Upper lobe of right lung (tissue), 1 donor: ENCODE measurements at regions of chr7 and their contacts with region 1.

Region 1: DNA sequence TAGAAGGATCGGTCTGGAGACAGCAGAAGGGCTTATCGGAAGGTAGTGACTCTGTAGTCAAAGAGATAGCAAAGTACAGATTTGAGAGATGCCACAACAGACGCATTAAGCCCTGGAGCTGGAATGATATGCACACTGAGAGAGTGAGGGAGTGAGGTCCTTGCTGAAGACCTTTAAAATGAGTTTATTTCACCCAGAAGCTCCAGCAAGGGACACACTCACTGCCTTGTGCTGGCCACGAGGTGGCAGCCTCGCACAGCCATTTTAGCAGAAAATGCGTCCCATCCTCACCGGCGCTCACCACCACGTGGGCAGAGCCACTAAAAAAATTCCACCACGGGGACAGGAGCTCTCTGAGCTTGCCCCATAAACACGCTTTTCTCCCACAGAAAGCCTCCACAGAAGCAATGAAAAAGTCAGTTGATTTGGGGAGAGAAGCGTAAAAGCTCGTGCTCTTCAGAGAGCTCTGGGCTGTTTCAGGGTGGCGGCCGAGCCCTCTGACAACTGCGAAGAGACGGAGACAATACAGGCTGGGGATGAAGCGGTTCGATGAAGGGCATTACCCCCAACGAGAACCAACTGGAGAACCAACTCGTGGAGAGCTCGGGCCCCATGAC is 163.0 kb upstream of the KLF14 start:
- DNase-seq: peak; percentile 86
- ATAC-seq: peak; percentile 64
- H3K4me3 ChIP-seq: no peak overlapping the region
- H3K27ac ChIP-seq: peak overlapping the region; percentile 37
- H3K4me1 ChIP-seq: peaks cover 78% of the 10 kb centered on the region
- H3K27me3 ChIP-seq: no peaks in the 10 kb centered on the region
- CTCF ChIP-seq: peak; percentile 79

Region 2: DNA sequence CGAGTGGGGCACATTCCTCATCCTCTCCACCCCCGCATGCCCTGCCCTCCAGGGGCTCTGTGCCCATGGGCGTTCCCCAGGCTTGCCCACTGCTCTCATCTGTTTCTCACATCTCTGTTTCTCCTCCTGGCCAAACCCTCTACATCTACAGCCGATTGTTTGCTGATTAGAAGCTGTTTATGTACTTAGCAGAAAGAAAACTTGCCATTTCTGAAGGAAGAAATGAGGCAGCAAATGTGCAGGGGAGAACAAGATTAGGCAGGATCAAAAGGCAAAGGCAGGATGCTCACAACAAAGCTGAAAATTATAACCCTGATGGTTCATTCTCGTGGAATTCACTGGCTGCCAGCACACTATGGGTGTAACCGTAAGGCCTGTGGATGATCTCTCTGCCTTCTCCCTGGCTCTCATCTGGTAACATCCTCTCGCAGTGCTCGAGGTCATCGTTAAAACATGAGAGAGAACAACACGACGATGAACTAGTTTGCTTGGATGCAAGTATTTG is 51.4 kb before region 1 on chr7:
- intact Hi-C with region 1: no loop called
- DNase-seq: no peak
- ATAC-seq: no peak
- H3K4me3 ChIP-seq: no peak overlapping the region
- H3K27ac ChIP-seq: no peak overlapping the region
- H3K4me1 ChIP-seq: no peaks in the 10 kb centered on the region
- H3K27me3 ChIP-seq: no peaks in the 10 kb centered on the region
- CTCF ChIP-seq: no peak

Region 3: GRCh38 chr7:131011976-131012375 is 115.0 kb after region 1 on chr7:
- intact Hi-C with region 1: loop called (anchors 10 kb)
- DNase-seq: no peak
- ATAC-seq: peak; percentile 33
- H3K4me3 ChIP-seq: no peak overlapping the region
- H3K27ac ChIP-seq: peak overlapping the region; percentile 73
- H3K4me1 ChIP-seq: peaks cover 94% of the 10 kb centered on the region
- H3K27me3 ChIP-seq: no peaks in the 10 kb centered on the region
- CTCF ChIP-seq: no peak